ENCODE measurements at regions of chr2 and their contacts with region 1.

Region 1: GRCh38 chr2:158179660-158180059 is 78.0 kb downstream of the UPP2 start:
- DNase-seq: peak; percentile 54 to 75 (median 73)
- H3K4me3 ChIP-seq: no peak overlapping the region
- H3K27ac ChIP-seq: no peak overlapping the region
- H3K4me1 ChIP-seq: peaks cover 3 to 16% (median 4%) of the 10 kb centered on the region in 4 experiments
- H3K27me3 ChIP-seq: no peaks in the 10 kb centered on the region

Region 2: GRCh38 chr2:158024288-158024898 is 155.3 kb before region 1 on chr2:
- CTCF ChIA-PET with region 1: interaction called, 11 read pairs
- POLR2A ChIA-PET with region 1: no interaction called
- DNase-seq: peak; percentile 38 to 71 (median 58)
- H3K4me3 ChIP-seq: no peak overlapping the region
- H3K27ac ChIP-seq: no peak overlapping the region
- H3K4me1 ChIP-seq: no peaks in the 10 kb centered on the region
- H3K27me3 ChIP-seq: no peaks in the 10 kb centered on the region

Region 3: DNA sequence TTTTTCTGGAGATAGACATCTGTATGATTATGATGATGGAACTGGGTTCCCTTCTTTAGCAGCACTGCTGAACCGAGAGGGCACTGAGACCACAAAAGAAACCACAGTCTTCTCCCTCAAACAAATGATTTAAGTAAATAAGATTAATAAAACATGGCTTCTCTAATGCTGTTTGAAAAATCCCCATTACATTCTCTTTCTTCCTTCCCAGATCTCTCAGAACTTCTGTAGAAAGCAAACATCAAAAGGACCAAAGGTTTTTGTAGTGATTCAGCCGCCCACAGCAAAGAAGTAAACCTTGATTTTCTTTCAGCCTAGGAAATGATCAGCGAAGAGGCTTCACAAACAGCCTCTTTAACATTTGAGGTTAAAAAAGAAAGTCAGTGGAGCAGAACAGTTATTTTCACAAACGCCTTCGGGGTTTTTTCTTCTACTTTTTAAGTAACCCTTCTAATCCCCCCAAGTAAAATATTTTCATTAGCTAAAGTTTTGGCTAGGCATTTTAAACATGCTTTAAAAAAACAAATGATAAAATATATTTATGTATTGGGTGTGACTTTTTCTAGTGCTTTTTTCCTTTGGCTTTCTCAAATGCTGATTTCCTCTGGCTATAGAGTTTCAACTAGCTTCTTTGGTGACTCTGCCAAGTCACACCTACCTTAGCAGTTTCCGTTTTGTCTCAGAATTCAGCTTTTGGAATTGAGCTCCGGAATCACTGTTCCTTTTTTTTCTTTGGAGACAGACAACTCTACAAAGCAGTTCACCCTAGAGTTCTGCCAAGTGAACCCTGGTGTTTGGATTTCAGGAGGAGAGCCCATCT is 11.6 kb after region 1 on chr2:
- CTCF ChIA-PET with region 1: interaction called, 11 read pairs
- POLR2A ChIA-PET with region 1: no interaction called
- DNase-seq: peak in 2 of 3 donors; percentile 31 to 56
- H3K4me3 ChIP-seq: peak overlapping the region in 1 of 7 experiments; percentile 1
- H3K27ac ChIP-seq: no peak overlapping the region
- H3K4me1 ChIP-seq: peaks cover 0 to 7% (median 2%) of the 10 kb centered on the region in 4 experiments
- H3K27me3 ChIP-seq: no peaks in the 10 kb centered on the region

Region 4: GRCh38 chr2:158456309-158457066 is 276.8 kb after region 1 on chr2 and contains the starts of genes CCDC148 and PKP4:
- CTCF ChIA-PET with region 1: interaction called, 19 read pairs
- POLR2A ChIA-PET with region 1: no interaction called
- DNase-seq: peak; percentile 92 to 96 (median 95)
- H3K4me3 ChIP-seq: peak within 1 kb of the TSS; percentile 76 to 92 (median 83)
- H3K27ac ChIP-seq: peak within 1 kb of the TSS; percentile 29 to 79
- H3K4me1 ChIP-seq: peaks cover 10 to 30% (median 19%) of the 10 kb centered on the region in 4 experiments
- H3K27me3 ChIP-seq: peaks cover 0 to 4% (median 0%) of the 10 kb centered on the region in 5 experiments

Region 5: DNA sequence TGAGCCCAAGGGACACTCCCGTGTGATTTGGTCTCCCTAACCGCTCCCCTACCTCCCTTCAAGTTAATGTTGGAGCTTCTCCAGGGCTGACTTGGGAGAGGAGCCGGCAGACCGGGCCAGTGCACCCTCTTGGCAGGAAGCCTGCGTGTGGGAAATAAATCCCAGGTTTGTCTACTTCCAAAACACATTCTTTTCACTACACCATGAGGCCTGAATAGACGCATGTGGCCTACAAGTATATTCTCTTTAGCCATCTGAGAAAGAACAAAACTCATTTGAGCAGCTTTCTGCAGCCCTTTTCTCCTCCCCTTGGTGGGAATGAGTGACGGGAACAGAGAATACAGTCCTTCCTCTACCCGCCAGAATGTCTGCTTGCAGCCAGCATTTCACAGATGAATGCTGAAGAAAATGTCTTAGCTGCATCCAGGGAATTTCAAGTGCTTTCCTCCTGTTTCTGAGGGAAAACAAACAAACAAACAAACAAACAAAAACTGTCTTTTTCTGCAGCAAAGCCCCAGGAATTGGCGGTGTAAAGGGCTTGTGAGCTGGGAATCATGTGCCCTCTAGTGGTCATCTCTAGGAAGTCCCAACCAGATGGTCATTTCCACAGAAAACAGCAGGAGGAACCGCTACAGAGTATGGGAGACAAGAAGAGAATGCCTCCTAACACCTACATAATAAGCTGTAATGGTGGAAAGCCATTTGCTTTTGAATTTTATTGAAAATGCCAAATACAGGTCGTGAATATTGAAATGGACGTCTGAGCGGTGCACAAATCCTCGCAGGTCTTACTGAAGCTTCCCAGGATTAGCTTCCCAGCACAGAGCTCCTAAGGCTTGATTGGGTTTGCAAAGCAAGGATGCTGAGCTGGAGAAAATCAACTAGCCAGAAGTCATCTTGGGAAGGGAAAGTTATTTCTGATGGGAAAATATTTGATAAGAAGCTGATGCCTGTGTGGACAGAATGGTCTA is 574.3 kb after region 1 on chr2:
- CTCF ChIA-PET with region 1: interaction called, 32 read pairs
- POLR2A ChIA-PET with region 1: no interaction called
- DNase-seq: peak; percentile 61 to 79 (median 72)
- H3K4me3 ChIP-seq: no peak overlapping the region
- H3K27ac ChIP-seq: no peak overlapping the region
- H3K4me1 ChIP-seq: no peaks in the 10 kb centered on the region
- H3K27me3 ChIP-seq: no peaks in the 10 kb centered on the region

Measured in common myeloid progenitor, CD34-positive (primary cell).